ENCODE measurements at regions of chr1 and their contacts with region 1.

Region 1: DNA sequence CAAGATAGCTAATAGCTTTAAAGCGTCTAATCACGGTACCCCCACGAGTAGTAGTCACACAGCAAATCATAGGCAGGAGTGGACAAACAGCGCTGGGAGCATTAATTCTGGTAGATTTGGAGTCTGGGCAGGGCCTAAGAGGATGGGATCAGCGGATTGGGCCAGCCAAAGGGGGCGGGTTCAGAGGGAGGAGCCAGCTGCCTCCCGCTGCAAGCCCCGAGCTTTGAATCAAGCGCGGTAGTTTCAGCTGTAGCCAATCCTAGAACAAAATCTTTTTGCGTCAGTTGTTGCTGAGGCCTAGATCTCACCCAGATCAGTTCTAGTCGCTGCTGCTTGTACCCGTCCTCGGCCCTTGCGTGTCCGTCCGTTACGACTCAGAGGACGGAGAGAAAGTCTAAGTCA is 576 bp upstream of the NASP start:
- DNase-seq: peak; percentile 97
- ATAC-seq: peak; percentile 84
- H3K4me3 Mint-ChIP-seq: peak overlapping the region; percentile 91
- H3K27ac Mint-ChIP-seq: peak overlapping the region; percentile 100
- H3K4me1 Mint-ChIP-seq: peaks cover 20% of the 10 kb centered on the region
- H3K27me3 Mint-ChIP-seq: no peaks in the 10 kb centered on the region

Region 2: GRCh38 chr1:44730741-44731512 is 852.3 kb before region 1 on chr1 and contains the start of gene RNU5D-1:
- CTCF ChIA-PET with region 1: no interaction called
- POLR2A ChIA-PET with region 1: interaction called, 4 read pairs
- intact Hi-C with region 1: loop called in 1 of 2 experiments (anchors 10 kb)
- DNase-seq: peak; percentile 98
- ATAC-seq: peak; percentile 85
- H3K4me3 Mint-ChIP-seq: peak within 1 kb of the TSS; percentile 67
- H3K27ac Mint-ChIP-seq: peak within 1 kb of the TSS; percentile 100
- H3K4me1 Mint-ChIP-seq: peaks cover 45% of the 10 kb centered on the region
- H3K27me3 Mint-ChIP-seq: no peaks in the 10 kb centered on the region
- total RNA-seq, gene RNU5D-1: not detected

Region 3: GRCh38 chr1:44985747-44986359 is 597.4 kb before region 1 on chr1:
- CTCF ChIA-PET with region 1: interaction called, 3 read pairs
- POLR2A ChIA-PET with region 1: no interaction called
- intact Hi-C with region 1: loop called in 1 of 2 experiments (anchors 1 kb)
- DNase-seq: no peak
- ATAC-seq: no peak
- H3K4me3 Mint-ChIP-seq: peak overlapping the region; percentile 96
- H3K27ac Mint-ChIP-seq: peak overlapping the region; percentile 87
- H3K4me1 Mint-ChIP-seq: peaks cover 22% of the 10 kb centered on the region
- H3K27me3 Mint-ChIP-seq: no peaks in the 10 kb centered on the region

Region 4: GRCh38 chr1:45490626-45491486 is 92.4 kb before region 1 on chr1 and contains the start of gene TESK2:
- CTCF ChIA-PET with region 1: interaction called, 4 read pairs
- POLR2A ChIA-PET with region 1: interaction called, 6 read pairs
- intact Hi-C with region 1: loop called in 1 of 2 experiments (anchors 1 kb)
- DNase-seq: peak; percentile 97
- ATAC-seq: peak; percentile 94
- H3K4me3 Mint-ChIP-seq: no peak within 1 kb of the TSS
- H3K27ac Mint-ChIP-seq: no peak within 1 kb of the TSS
- H3K4me1 Mint-ChIP-seq: peaks cover 4% of the 10 kb centered on the region
- H3K27me3 Mint-ChIP-seq: no peaks in the 10 kb centered on the region
- total RNA-seq, gene TESK2: 3.1 to 3.3 TPM

Region 5: GRCh38 chr1:45550401-45551351 is 32.6 kb before region 1 on chr1 and contains the start of gene AKR1A1:
- CTCF ChIA-PET with region 1: interaction called, 3 read pairs
- POLR2A ChIA-PET with region 1: no interaction called
- intact Hi-C with region 1: loop called (anchors 1 kb)
- DNase-seq: peak; percentile 95
- ATAC-seq: peak; percentile 94
- H3K4me3 Mint-ChIP-seq: peak within 1 kb of the TSS; percentile 94
- H3K27ac Mint-ChIP-seq: peak within 1 kb of the TSS; percentile 94
- H3K4me1 Mint-ChIP-seq: peaks cover 16% of the 10 kb centered on the region
- H3K27me3 Mint-ChIP-seq: no peaks in the 10 kb centered on the region
- total RNA-seq, gene AKR1A1: 140 to 181 TPM

Region 6: GRCh38 chr1:45803301-45803780 is 220.1 kb after region 1 on chr1 and contains the start of gene MAST2:
- CTCF ChIA-PET with region 1: no interaction called
- POLR2A ChIA-PET with region 1: no interaction called
- intact Hi-C with region 1: loop called in 1 of 2 experiments (anchors 1 kb)
- DNase-seq: peak; percentile 92
- ATAC-seq: peak; percentile 96
- H3K4me3 Mint-ChIP-seq: peak within 1 kb of the TSS; percentile 98
- H3K27ac Mint-ChIP-seq: peak within 1 kb of the TSS; percentile 82
- H3K4me1 Mint-ChIP-seq: peaks cover 27% of the 10 kb centered on the region
- H3K27me3 Mint-ChIP-seq: no peaks in the 10 kb centered on the region
- total RNA-seq, gene MAST2: 20.1 to 22.9 TPM

Measured in activated CD4-positive, alpha-beta T cell treated with anti-CD3 and anti-CD28 coated beads for 36 hours (primary cell).